ENCODE measurements at regions of chr6 and their contacts with region 1.

Region 1: GRCh38 chr6:41367700-41368099 is 32.3 kb downstream of the NCR2 start:
- DNase-seq: peak in 1 of 2 experiments; percentile 79
- H3K4me3 ChIP-seq: no peak overlapping the region
- H3K27ac ChIP-seq: no peak overlapping the region
- H3K4me1 ChIP-seq: peaks cover 3 to 22% (median 11%) of the 10 kb centered on the region in 4 experiments
- H3K27me3 ChIP-seq: peaks cover 31 to 38% (median 38%) of the 10 kb centered on the region in 4 experiments
- CTCF ChIP-seq: peak in 2 of 3 experiments; percentile 97; a peak in 3 of 4 replicates
- EP300 ChIP-seq: no peak
- POLR2A ChIP-seq: no peak
- RAD21 ChIP-seq: peak; percentile 98 to 99

Region 2: DNA sequence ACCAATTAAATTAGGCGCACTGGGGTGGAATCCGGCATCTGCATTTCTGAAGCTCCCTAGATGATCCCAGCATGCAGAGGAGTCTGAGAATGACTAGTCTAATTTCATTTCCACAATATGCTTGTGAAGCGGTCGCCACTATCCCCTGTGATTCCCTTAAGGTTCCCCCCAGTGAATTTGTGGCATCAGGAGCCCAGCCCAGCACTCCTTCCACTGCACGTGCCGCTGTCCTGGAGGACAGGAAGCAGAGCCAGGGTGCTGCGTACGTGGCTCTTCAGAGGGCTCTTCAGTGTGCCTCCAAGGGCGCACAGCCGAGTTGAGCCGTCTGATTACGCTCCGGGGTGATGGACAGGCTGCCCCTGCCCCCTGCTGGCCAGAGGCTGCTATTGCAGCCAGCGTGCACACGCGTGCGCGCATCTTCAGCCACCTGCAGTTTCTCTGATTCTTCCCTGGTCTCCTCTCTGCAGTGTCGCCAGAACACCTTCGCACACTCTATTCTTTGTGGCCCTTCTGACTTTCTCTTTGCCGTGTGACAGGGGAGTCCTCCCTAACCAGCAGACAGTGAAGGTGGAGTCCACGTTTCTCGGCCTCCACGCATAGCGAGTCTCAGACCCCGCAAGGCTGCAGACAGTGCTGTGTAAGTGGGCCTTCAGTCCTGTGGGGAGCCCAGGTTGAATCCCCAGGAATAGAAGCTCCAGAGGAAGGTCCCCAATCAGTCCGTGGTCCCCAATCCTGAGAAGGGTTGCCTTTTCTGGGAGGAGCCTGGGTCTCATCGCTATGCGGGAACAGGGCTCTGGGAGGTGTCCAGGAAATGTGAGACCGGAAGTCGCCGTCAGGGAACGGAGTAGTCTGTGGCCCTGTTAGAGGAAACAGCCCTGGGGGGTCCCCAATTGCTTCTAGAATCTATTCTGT is 48.8 kb before region 1 on chr6:
- CTCF ChIA-PET with region 1: interaction called, 12 read pairs
- POLR2A ChIA-PET with region 1: no interaction called
- DNase-seq: peak; percentile 82 to 90
- H3K4me3 ChIP-seq: peak overlapping the region in 2 of 4 experiments; percentile 16 to 47; a peak in 3 of 8 replicates
- H3K27ac ChIP-seq: no peak overlapping the region
- H3K4me1 ChIP-seq: peaks cover 0 to 13% (median 3%) of the 10 kb centered on the region in 4 experiments; a peak in 5 of 7 replicates
- H3K27me3 ChIP-seq: peaks cover 0 to 4% (median 2%) of the 10 kb centered on the region in 4 experiments; a peak in 1 of 7 replicates
- CTCF ChIP-seq: peak; percentile 97 to 100 (median 100)
- EP300 ChIP-seq: no peak
- POLR2A ChIP-seq: peak in 1 of 2 experiments; percentile 59; a peak in 2 of 3 replicates
- RAD21 ChIP-seq: peak; percentile 95 to 96

Region 3: GRCh38 chr6:41406728-41407489 is 39.2 kb after region 1 on chr6:
- CTCF ChIA-PET with region 1: interaction called, 178 read pairs
- POLR2A ChIA-PET with region 1: interaction called, 30 read pairs
- DNase-seq: peak in 1 of 2 experiments; percentile 80
- H3K4me3 ChIP-seq: peak overlapping the region; percentile 9 to 52 (median 24); a peak in 5 of 8 replicates
- H3K27ac ChIP-seq: no peak overlapping the region
- H3K4me1 ChIP-seq: peaks cover 4 to 36% (median 21%) of the 10 kb centered on the region in 4 experiments
- H3K27me3 ChIP-seq: peaks cover 68 to 98% (median 90%) of the 10 kb centered on the region in 4 experiments
- CTCF ChIP-seq: no peak
- EP300 ChIP-seq: no peak
- POLR2A ChIP-seq: no peak
- RAD21 ChIP-seq: no peak; a peak in 1 of 4 replicates

Region 4: DNA sequence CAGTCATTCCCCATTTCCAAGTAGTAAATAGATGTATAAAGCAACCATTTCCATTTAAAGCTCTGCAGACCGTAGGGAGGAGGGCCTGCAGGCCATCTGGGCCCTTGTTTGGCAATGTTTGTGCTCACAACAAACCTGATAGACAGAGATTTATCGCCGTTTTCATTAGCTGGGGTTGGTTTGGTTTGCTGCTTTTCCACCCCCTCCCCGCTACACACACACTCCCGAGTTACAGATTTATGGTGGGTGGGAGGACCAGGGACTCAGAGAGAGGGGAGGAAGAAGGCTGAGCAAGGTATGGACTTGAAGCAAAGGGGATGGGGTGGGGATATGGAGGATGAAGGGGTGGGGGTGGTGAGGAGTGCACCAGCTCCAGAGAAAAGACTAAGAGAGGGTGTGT is 141.9 kb after region 1 on chr6:
- CTCF ChIA-PET with region 1: interaction called, 12 read pairs
- POLR2A ChIA-PET with region 1: no interaction called
- DNase-seq: no peak
- H3K4me3 ChIP-seq: no peak overlapping the region
- H3K27ac ChIP-seq: no peak overlapping the region
- H3K4me1 ChIP-seq: peaks cover 0 to 11% (median 4%) of the 10 kb centered on the region in 4 experiments; a peak in 6 of 7 replicates
- H3K27me3 ChIP-seq: peaks cover 25 to 76% (median 55%) of the 10 kb centered on the region in 4 experiments
- CTCF ChIP-seq: no peak
- EP300 ChIP-seq: no peak
- POLR2A ChIP-seq: no peak
- RAD21 ChIP-seq: no peak

Region 5: DNA sequence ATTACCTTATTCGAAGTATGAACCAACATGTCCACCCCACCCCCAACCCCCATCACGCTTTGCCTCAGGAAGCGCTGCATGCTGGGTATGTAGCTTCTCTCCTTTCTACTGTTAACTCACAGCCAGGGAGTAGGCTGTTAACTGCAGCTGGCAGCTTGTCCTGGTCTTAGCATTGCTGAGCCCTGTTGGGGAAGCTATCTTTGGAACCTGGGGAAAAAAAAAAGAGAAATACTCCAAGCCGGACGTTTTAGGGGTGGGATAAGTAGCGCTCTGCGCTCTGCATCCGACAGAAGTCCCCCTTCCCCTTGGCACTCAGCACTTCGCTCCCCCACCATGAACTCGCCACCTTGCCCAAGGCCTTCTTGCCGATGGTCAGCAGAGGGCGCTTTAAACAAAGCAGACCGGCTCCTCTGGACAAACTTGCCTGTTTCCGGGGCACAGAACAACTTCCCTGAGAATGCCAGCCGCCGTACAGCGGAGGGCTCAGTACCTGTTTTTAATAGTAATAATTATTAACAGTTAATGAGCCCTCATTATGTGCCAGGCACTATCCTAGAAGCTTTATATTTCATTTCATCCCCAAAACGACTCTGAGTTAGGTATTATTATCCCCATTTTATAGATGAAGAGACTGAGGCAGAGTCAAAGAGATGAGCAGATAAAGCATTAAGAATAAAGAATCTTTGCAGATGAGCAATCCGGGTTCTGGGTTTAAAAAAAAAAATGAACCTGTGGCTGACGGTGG is 235.3 kb after region 1 on chr6:
- CTCF ChIA-PET with region 1: interaction called, 238 read pairs
- POLR2A ChIA-PET with region 1: interaction called, 3 read pairs
- DNase-seq: peak; percentile 61 to 84
- H3K4me3 ChIP-seq: peak overlapping the region in 3 of 4 experiments; percentile 32 to 54 (median 33); a peak in 5 of 8 replicates
- H3K27ac ChIP-seq: no peak overlapping the region
- H3K4me1 ChIP-seq: peaks cover 0 to 30% (median 11%) of the 10 kb centered on the region in 4 experiments; a peak in 6 of 7 replicates
- H3K27me3 ChIP-seq: no peaks in the 10 kb centered on the region
- CTCF ChIP-seq: peak in 2 of 3 experiments; percentile 94 to 95; a peak in 3 of 4 replicates
- EP300 ChIP-seq: no peak; a peak in 1 of 3 replicates
- POLR2A ChIP-seq: 0 out of 3 replicates have a peak, but pooled peaks of 1 of the 2 experiments have one; percentile 25
- RAD21 ChIP-seq: peak; percentile 95 to 96

Region 6: DNA sequence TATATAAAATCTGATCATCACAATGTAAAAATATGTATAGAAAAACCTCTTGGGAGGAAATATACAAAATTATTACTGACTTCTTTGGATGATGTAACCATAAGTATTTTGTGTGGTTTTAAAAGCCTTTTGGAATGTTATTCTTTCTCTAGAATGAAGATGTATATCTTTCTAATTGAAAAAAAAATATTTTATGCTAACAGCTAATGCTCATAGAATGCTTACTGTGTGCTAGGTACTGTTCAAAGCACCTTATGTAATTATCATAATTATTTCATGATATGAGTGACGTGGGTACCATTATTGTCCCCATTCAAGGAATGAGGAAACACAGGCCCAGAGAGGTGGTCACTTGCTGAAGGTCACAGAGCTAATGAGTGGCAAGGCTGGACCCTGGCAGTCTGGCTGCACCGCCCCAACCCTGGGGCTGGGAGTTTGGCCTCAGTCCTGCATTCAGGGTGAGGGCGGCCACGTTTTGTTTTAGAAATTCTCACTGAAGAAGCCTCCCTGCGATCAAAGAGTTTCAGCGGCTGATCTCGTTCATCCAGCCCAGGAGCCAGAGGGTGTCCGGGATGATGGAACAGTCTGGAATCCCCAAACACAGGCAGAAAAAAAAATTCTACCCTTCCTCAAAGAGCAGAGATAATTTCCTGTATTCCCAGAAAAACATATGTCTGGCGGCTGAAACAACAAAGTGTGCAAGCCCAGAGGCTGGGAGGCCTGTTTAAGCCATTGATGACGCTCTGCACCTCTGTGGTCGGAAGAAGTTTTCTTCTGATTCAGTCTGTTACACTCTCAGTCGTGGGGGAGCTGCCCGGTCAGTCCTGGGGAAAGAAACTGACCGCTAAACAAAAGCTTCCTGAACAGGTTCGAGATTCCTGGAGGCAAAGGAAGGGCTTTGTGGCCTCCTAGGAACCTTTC is 330.4 kb after region 1 on chr6:
- CTCF ChIA-PET with region 1: interaction called, 12 read pairs
- POLR2A ChIA-PET with region 1: no interaction called
- DNase-seq: no peak
- H3K4me3 ChIP-seq: no peak overlapping the region
- H3K27ac ChIP-seq: no peak overlapping the region
- H3K4me1 ChIP-seq: peaks cover 0 to 8% (median 2%) of the 10 kb centered on the region in 4 experiments; a peak in 5 of 7 replicates
- H3K27me3 ChIP-seq: no peaks in the 10 kb centered on the region; a peak in 1 of 7 replicates
- CTCF ChIP-seq: no peak
- EP300 ChIP-seq: no peak
- POLR2A ChIP-seq: no peak
- RAD21 ChIP-seq: no peak

Measured in H1 (cell line).